Activated B cell treated with CpG ODN at 0.5 μM for 24 hours (primary cell): ENCODE measurements at regions of chr14 and their contacts with region 1.

Region 1: GRCh38 chr14:56659964-56660551 is 80.5 kb downstream of the TMEM260 start:
- DNase-seq: no peak
- ATAC-seq: no peak
- H3K4me3 Mint-ChIP-seq: no peak overlapping the region
- H3K27ac Mint-ChIP-seq: no peak overlapping the region
- H3K4me1 Mint-ChIP-seq: no peaks in the 10 kb centered on the region
- H3K27me3 Mint-ChIP-seq: no peaks in the 10 kb centered on the region
- CTCF ChIP-seq: no peak

Region 2: DNA sequence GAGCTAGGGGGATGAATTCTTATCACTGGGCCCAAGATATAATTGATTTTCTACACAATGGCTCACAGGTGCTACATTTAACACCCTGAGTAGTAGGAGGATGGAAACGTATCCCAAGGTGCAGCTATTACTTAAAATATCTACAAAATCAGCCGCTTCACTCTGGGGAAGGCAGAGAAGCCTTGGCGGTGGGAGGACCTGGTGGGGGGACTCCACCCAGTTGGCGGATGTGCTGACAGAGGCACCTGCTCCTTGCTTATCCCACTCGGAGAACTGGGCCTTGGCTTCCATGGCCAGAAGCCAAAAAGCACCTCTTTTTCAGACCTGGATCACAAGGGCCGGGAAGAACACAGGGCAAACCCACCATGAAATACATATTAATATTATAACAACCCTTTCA is 43.9 kb after region 1 on chr14:
- CTCF ChIA-PET with region 1: no interaction called
- POLR2A ChIA-PET with region 1: no interaction called
- intact Hi-C with region 1: no loop called
- DNase-seq: no peak
- ATAC-seq: no peak
- H3K4me3 Mint-ChIP-seq: no peak overlapping the region
- H3K27ac Mint-ChIP-seq: no peak overlapping the region
- H3K4me1 Mint-ChIP-seq: no peaks in the 10 kb centered on the region
- H3K27me3 Mint-ChIP-seq: peaks cover 8% of the 10 kb centered on the region
- CTCF ChIP-seq: no peak

Region 3: DNA sequence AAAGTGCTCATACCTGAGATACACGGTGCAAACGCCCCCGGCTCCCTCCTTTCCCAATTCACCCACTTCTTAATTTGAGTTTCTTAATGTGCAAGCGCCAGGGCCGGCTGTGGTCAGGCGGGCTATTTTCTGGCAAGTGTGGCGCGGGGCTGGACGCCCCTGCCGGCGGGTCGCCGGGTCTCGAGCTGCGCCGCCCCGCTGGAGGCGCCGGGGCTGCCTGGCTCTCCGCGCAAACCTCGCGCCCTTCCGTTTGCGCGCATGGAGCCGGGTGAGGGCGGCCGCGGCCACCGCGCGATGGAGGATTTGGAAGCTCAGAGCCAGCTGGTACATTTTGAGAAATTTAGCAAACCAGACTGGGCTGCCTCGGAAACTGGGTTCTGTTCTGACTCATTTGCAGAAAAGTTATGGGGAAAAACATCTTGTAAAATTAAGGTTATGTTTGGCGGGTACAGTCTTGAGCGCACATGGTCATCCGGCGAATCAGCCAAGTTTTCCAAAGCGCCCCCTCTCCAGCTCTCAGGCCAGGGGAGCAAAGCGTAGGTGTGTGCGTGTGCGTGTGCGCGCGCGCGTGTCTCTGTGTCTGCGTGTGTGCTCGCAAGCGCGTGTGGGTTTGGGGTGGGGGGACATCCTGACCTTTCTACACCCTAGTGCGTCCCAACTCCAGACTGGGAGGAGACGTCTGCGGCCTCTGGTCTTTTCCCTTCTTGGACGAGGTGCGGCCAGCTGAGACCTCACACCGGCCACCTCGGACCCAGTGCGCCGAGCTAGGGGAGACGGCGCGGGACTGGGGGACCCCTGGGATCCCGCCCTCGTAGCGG is 156.7 kb after region 1 on chr14:
- CTCF ChIA-PET with region 1: no interaction called
- POLR2A ChIA-PET with region 1: no interaction called
- intact Hi-C with region 1: no loop called
- DNase-seq: no peak
- ATAC-seq: no peak
- H3K4me3 Mint-ChIP-seq: no peak overlapping the region
- H3K27ac Mint-ChIP-seq: no peak overlapping the region
- H3K4me1 Mint-ChIP-seq: peaks cover 1% of the 10 kb centered on the region
- H3K27me3 Mint-ChIP-seq: peaks cover 60% of the 10 kb centered on the region
- CTCF ChIP-seq: no peak

Region 4: GRCh38 chr14:56949828-56950227 is 289.8 kb after region 1 on chr14:
- CTCF ChIA-PET with region 1: no interaction called
- POLR2A ChIA-PET with region 1: no interaction called
- intact Hi-C with region 1: no loop called
- DNase-seq: no peak
- ATAC-seq: no peak
- H3K4me3 Mint-ChIP-seq: no peak overlapping the region
- H3K27ac Mint-ChIP-seq: no peak overlapping the region
- H3K4me1 Mint-ChIP-seq: no peaks in the 10 kb centered on the region
- H3K27me3 Mint-ChIP-seq: no peaks in the 10 kb centered on the region
- CTCF ChIP-seq: no peak

Region 5: GRCh38 chr14:57182760-57183503 is 522.9 kb after region 1 on chr14:
- CTCF ChIA-PET with region 1: no interaction called
- POLR2A ChIA-PET with region 1: no interaction called
- intact Hi-C with region 1: loop called (anchors 5 kb)
- DNase-seq: no peak
- ATAC-seq: no peak
- H3K4me3 Mint-ChIP-seq: no peak overlapping the region
- H3K27ac Mint-ChIP-seq: no peak overlapping the region
- H3K4me1 Mint-ChIP-seq: no peaks in the 10 kb centered on the region
- H3K27me3 Mint-ChIP-seq: peaks cover 14% of the 10 kb centered on the region
- CTCF ChIP-seq: no peak

Region 6: GRCh38 chr14:57317316-57317715 is 657.3 kb after region 1 on chr14:
- CTCF ChIA-PET with region 1: interaction called, 3 read pairs
- POLR2A ChIA-PET with region 1: no interaction called
- intact Hi-C with region 1: loop called (anchors 1 kb)
- DNase-seq: no peak
- ATAC-seq: peak; percentile 68
- H3K4me3 Mint-ChIP-seq: no peak overlapping the region
- H3K27ac Mint-ChIP-seq: no peak overlapping the region
- H3K4me1 Mint-ChIP-seq: peaks cover 3% of the 10 kb centered on the region
- H3K27me3 Mint-ChIP-seq: no peaks in the 10 kb centered on the region
- CTCF ChIP-seq: peak; percentile 74

Region 7: GRCh38 chr14:57583396-57583795 is 923.3 kb after region 1 on chr14:
- CTCF ChIA-PET with region 1: no interaction called
- POLR2A ChIA-PET with region 1: no interaction called
- intact Hi-C with region 1: no loop called
- DNase-seq: no peak
- ATAC-seq: no peak
- H3K4me3 Mint-ChIP-seq: no peak overlapping the region
- H3K27ac Mint-ChIP-seq: no peak overlapping the region
- H3K4me1 Mint-ChIP-seq: no peaks in the 10 kb centered on the region
- H3K27me3 Mint-ChIP-seq: no peaks in the 10 kb centered on the region
- CTCF ChIP-seq: no peak